ENCODE measurements at regions of chr9 and their contacts with region 1.

Region 1: DNA sequence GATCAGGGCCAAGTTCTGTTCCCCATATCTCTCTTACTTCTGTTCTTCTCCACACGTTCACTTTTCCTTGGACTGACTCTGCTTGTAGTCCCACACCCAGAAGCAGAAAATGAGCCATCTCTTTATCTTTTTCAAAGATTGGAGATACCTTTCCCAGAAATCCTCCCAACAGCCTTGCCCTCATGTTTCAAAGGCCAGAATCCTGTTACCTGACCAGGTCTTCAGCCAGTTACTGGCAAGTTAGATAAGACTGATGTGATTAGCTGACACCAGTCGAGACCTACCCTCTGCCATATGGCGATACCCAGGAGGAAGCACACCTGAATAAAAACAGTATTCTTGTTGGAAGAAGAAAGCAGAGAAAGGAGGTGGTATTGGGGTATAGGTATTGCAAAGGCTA is 213.8 kb upstream of the RFX3 start:
- DNase-seq: no peak
- ATAC-seq: no peak

Region 2: DNA sequence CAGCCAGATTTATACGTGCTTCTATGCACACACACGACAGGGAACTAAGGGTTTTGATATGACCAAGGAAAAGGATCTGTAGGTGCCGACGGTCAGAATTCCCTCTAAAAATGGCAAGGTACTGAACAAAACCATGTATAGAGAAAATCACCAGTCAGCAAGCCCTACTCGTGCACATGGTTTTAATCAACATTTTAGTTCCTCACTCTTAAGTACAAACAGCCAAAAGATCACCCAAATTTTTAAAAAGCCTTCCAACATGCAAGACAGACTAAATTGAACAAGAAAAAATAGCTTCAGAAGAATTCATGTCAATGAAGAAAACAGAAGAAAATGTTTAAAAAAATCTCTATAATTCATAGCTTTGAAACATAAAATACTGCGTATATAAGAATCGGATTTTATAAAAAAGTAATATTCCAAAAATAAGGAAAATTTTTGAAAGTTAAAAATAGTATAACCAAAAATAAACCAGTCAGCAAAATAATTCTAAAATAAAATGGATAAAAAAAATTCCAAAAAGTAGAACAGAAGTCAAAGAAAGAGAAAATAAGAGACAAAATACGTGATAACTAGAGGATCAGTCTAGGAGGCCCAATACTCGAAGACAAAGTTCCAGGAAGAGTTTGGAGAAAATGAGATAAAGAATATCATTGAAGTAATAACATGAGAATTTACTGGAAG is 1065.4 kb before region 1 on chr9:
- intact Hi-C with region 1: no loop called
- DNase-seq: no peak
- ATAC-seq: no peak

Region 3: GRCh38 chr9:3758816-3759576 is 19.4 kb after region 1 on chr9:
- intact Hi-C with region 1: loop called (anchors 2 kb)
- DNase-seq: no peak
- ATAC-seq: no peak

Region 4: DNA sequence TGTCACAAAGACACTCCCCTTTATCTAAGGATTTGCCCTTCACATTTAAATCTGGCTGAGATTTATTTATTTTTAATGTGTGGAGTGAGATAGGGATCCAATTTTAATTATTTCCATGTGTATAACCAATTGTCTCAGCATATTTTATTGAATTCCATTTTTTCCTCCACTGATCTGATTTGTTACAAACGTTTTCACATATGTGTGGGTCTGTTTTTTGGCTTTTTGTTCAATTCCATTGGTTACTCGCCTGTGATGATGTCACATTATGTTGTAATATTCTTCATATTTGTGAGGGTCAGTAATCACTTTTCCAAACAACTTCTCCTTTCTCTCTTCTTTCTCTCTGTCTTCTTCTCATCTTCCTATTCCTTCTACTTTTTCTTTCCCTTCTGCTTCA is 64.5 kb after region 1 on chr9:
- intact Hi-C with region 1: no loop called
- DNase-seq: no peak
- ATAC-seq: no peak

Region 5: DNA sequence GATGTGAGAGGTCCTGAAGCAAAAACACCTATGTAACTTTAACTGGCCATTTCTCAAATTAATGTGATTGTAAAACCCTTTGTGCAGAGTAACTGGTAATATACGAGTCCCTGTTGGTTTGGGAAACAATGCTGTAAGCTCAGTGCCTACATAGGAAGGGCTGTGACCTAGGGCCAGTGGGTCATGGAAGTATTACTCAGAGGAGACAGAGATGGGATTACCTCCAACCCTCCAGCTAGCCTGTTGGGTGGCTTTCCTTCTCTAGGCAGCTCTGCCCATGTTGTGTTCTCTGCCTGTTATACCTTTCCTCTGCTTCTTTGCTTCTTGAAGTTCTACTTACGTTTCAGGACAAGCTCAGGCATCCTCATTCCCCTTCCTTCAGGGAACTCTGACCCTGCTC is 81.0 kb after region 1 on chr9:
- intact Hi-C with region 1: no loop called
- DNase-seq: no peak
- ATAC-seq: no peak

Measured in Right ventricle myocardium superior (tissue), 1 donor.